BJ (cell line): ENCODE measurements at regions of chr6 and their contacts with region 1.

Region 1: DNA sequence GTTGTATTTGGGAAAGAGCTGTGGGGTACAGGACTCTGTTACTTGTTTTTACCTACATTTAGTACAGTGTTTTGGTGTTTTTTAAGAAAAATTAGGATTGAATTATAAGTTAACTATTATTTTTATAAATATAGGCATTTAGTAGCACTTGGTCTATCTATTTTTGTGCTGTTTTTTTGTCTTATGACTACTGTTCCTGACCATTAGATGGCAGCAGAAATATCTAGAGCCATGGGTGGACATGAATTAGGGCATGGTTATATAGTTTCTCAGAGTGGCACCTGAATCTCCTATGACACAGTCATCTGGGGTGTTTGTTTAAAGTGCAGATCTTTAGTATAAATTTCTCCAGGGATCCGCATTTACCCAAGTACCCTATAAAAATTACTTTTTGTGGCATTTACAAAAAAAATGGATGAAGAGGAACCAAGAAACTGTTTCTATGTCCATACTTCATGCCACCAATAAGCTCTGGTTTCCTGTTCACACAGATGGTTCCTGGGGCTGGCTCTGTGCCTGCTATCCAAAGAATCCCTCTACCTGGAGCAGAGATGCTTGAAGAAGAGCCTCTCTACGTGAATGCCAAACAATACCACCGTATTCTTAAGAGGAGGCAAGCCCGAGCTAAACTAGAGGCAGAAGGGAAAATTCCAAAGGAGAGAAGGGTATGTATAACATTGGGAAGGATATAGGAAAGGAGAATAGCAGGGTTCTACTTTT is 19.8 kb downstream of the NFYA start:
- DNase-seq: no peak
- H3K4me3 ChIP-seq: no peak overlapping the region
- H3K27me3 ChIP-seq: no peaks in the 10 kb centered on the region
- CTCF ChIP-seq: peak; percentile 56

Region 2: DNA sequence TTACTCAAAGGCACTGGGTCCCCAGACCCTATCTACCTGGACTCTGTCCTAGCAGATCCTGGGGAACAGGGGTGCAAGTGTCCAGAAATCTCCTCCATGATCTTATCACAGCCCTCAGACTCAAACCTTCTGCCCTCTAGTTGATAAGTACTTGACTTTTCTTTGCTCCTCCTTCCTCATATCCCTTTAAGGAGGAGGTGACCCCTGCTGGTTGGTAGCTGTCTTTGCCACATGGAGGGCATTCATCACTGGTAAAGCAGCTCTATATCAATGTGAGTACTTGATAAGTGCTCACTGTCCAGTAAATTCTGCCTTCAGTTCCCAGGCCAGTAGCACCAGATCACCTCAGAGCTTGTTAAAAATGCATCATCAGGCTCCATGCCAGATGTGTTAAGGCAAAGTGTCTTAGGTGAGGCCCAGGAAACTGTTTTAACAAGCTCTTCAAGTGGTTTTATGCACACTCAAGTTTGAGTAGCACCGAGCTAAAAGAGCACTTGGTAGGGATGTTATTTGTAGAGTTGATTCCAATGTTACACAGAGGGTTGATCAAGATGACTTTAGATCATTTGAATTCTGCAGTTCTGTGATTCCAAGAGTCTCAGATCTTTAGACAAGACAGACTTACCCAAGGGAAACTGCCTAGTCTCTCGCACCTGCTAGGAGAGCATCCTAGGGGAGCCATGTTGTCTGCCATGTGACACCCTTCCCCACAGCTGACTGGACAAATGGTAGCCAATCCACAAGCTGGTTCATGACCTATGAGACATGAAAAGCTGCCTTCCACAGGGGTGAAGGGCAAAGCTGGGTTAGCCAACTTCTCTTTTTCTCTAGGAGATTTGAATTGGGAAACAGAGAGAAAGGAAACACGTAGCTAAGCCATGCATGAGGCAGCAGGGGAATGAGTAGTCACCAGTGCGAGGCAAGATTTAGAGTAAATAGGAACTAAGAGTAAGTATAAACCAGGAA is 89.8 kb after region 1 on chr6:
- CTCF ChIA-PET with region 1: interaction called, 39 read pairs
- POLR2A ChIA-PET with region 1: interaction called, 4 read pairs
- DNase-seq: no peak
- H3K4me3 ChIP-seq: no peak overlapping the region
- H3K27me3 ChIP-seq: peaks cover 11% of the 10 kb centered on the region
- CTCF ChIP-seq: peak; percentile 78